Aorta (tissue), 5 donors: ENCODE measurements at regions of chr1 and their contacts with region 1.

Region 1: GRCh38 chr1:68954841-68955240 is 458.0 kb upstream of the DEPDC1 start:
- DNase-seq: no peak
- ATAC-seq: peak; percentile 49
- H3K4me3 ChIP-seq: no peak overlapping the region
- H3K27ac ChIP-seq: no peak overlapping the region
- H3K4me1 ChIP-seq: no peaks in the 10 kb centered on the region
- H3K27me3 ChIP-seq: no peaks in the 10 kb centered on the region

Region 2: GRCh38 chr1:68421350-68421749 is 533.5 kb before region 1 on chr1:
- intact Hi-C with region 1: no loop called
- DNase-seq: no peak
- ATAC-seq: no peak
- H3K4me3 ChIP-seq: no peak overlapping the region
- H3K27ac ChIP-seq: no peak overlapping the region
- H3K4me1 ChIP-seq: no peaks in the 10 kb centered on the region
- H3K27me3 ChIP-seq: no peaks in the 10 kb centered on the region

Region 3: GRCh38 chr1:68904477-68904876 is 50.4 kb before region 1 on chr1:
- intact Hi-C with region 1: no loop called
- DNase-seq: no peak
- ATAC-seq: no peak
- H3K4me3 ChIP-seq: no peak overlapping the region
- H3K27ac ChIP-seq: no peak overlapping the region
- H3K4me1 ChIP-seq: no peaks in the 10 kb centered on the region
- H3K27me3 ChIP-seq: no peaks in the 10 kb centered on the region

Region 4: GRCh38 chr1:68916221-68916902 is 38.5 kb before region 1 on chr1:
- intact Hi-C with region 1: loop called in 1 of 2 experiments (anchors 5 kb)
- DNase-seq: peak in 1 of 2 donors; percentile 60
- ATAC-seq: peak; percentile 88
- H3K4me3 ChIP-seq: no peak overlapping the region
- H3K27ac ChIP-seq: peak overlapping the region in 1 of 2 donors; percentile 51
- H3K4me1 ChIP-seq: peaks cover 4 to 6% of the 10 kb centered on the region in 2 donors
- H3K27me3 ChIP-seq: no peaks in the 10 kb centered on the region

Region 5: GRCh38 chr1:68994096-68994495 is 39.3 kb after region 1 on chr1:
- intact Hi-C with region 1: no loop called
- DNase-seq: no peak
- ATAC-seq: no peak
- H3K4me3 ChIP-seq: no peak overlapping the region
- H3K27ac ChIP-seq: no peak overlapping the region
- H3K4me1 ChIP-seq: no peaks in the 10 kb centered on the region
- H3K27me3 ChIP-seq: no peaks in the 10 kb centered on the region